ENCODE measurements at regions of chr3 and their contacts with region 1.

Region 1: DNA sequence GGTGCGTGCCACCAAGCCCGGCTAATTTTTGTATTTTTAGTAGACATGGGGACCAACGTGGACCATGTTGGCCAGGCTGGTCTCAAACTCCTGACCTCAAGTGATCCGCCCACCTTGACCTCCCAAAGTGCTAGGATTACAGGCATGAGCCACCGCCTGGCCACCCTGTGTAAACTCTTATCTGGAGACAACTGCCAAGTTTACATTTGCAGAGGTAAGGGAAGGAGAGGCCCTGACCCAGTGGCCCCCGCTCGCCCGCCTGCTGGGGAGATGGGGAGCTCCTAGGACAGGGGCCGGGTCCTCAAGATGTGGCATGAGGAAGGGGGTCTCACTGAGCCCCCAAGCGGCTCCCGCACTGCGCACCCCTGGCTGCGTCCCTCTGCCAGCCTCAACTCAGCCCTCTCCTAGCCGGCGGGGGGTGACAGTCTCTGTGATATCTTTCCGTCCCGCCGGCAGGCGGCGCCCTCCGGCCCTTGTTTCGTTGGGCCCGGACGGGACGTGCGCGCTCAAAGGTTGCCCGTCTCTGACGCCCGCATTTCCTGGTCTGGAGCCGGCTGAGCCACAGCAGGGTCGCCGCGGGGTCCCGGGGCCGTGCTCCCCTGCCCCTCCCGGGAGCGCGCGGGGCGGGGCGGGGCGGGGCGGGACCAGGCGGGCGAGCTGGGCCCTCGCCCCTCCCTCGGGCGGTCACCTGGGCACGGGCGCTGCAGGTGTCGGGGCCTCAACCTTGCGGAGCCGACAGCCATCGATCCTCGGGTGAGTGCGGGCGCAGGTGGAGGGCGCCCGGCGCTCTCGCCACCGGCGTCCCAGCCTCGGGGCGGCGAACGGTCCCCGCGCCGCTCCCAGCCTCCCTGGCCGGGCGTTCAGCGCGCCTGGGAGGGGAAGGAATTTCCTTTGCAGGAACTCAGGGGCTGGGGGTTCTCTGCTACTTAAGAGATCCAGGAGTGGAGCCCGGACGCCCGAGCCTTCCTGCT is at the start of gene GPR160:
- DNase-seq: peak; percentile 90
- ATAC-seq: peak; percentile 77
- H3K4me3 ChIP-seq: peak within 1 kb of the TSS; percentile 66 to 91 (median 83)
- H3K4me3 Mint-ChIP-seq: peak within 1 kb of the TSS; percentile 93
- H3K27ac ChIP-seq: peak within 1 kb of the TSS; percentile 28 to 48
- H3K27ac Mint-ChIP-seq: peak within 1 kb of the TSS; percentile 89
- H3K4me1 ChIP-seq: peaks cover 11 to 25% of the 10 kb centered on the region in 2 donors
- H3K4me1 Mint-ChIP-seq: peaks cover 44% of the 10 kb centered on the region
- H3K27me3 ChIP-seq: no peaks in the 10 kb centered on the region
- H3K27me3 Mint-ChIP-seq: no peaks in the 10 kb centered on the region
- CTCF ChIP-seq: peak; percentile 91
- total RNA-seq, gene GPR160: 17.5 and 17.7 TPM in 2 replicates

Region 2: GRCh38 chr3:169812332-169813235 is 225.2 kb before region 1 on chr3 and contains the starts of genes LRRC34 and LRRIQ4:
- CTCF ChIA-PET with region 1: no interaction called
- POLR2A ChIA-PET with region 1: no interaction called
- intact Hi-C with region 1: loop called (anchors 5 kb)
- DNase-seq: peak; percentile 80
- ATAC-seq: peak; percentile 60
- H3K4me3 ChIP-seq: peak within 1 kb of the TSS; percentile 66 to 79 (median 69)
- H3K4me3 Mint-ChIP-seq: peak within 1 kb of the TSS; percentile 87
- H3K27ac ChIP-seq: peak within 1 kb of the TSS; percentile 46 to 77
- H3K27ac Mint-ChIP-seq: peak within 1 kb of the TSS; percentile 93
- H3K4me1 ChIP-seq: peaks cover 19 to 28% of the 10 kb centered on the region in 2 donors
- H3K4me1 Mint-ChIP-seq: peaks cover 34% of the 10 kb centered on the region
- H3K27me3 ChIP-seq: no peaks in the 10 kb centered on the region
- H3K27me3 Mint-ChIP-seq: no peaks in the 10 kb centered on the region
- CTCF ChIP-seq: no peak
- total RNA-seq, gene LRRC34: 7.1 and 11.8 TPM in 2 replicates
- total RNA-seq, gene LRRIQ4: 0.53 and 0.71 TPM in 2 replicates

Region 3: DNA sequence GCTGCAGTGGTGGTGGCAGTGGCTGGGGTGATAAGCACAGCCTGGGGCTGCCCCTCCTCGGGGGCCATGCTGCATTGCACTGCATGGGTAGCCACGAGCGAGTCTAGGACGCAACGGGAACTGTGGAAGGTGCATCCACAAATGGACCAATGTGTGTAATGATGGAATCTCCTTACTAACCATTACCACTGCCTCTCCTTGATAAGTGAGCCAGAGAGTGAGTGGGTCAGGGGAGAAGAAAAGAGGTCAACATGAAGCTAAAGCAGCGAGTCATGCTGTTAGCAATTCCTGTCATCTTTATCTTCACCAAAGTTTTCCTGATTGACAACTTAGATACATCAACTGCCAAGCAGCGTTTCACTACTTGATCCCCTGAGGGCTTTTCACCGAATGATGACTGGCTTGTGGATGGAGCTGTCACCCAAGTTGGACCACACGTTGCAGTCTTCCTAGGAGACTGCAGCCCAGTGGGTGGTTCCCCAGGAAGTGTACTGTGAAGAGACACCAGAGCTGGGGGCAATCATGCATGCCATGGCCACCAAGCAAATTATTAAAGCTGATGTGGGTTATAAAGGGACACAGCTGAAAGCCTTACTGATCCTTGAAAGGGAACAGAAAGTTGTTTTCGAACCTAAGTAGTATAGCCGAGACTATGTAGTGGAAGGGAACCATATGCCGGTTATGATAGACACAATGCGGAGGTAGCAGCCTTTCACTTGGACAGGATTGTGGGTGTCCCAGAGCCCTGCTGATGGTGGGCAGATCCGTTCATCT is 105.8 kb before region 1 on chr3:
- CTCF ChIA-PET with region 1: interaction called, 5 read pairs
- POLR2A ChIA-PET with region 1: interaction called, 10 read pairs
- intact Hi-C with region 1: loop called (anchors 1 kb)
- DNase-seq: peak; percentile 89
- ATAC-seq: peak; percentile 83
- H3K4me3 ChIP-seq: peak overlapping the region in 4 of 5 experiments; percentile 7 to 54 (median 34)
- H3K4me3 Mint-ChIP-seq: peak overlapping the region; percentile 82
- H3K27ac ChIP-seq: peak overlapping the region; percentile 83 to 86
- H3K27ac Mint-ChIP-seq: peak overlapping the region; percentile 97
- H3K4me1 ChIP-seq: peaks cover 49 to 53% of the 10 kb centered on the region in 2 donors
- H3K4me1 Mint-ChIP-seq: peaks cover 55% of the 10 kb centered on the region
- H3K27me3 ChIP-seq: no peaks in the 10 kb centered on the region
- H3K27me3 Mint-ChIP-seq: no peaks in the 10 kb centered on the region
- CTCF ChIP-seq: no peak

Region 4: DNA sequence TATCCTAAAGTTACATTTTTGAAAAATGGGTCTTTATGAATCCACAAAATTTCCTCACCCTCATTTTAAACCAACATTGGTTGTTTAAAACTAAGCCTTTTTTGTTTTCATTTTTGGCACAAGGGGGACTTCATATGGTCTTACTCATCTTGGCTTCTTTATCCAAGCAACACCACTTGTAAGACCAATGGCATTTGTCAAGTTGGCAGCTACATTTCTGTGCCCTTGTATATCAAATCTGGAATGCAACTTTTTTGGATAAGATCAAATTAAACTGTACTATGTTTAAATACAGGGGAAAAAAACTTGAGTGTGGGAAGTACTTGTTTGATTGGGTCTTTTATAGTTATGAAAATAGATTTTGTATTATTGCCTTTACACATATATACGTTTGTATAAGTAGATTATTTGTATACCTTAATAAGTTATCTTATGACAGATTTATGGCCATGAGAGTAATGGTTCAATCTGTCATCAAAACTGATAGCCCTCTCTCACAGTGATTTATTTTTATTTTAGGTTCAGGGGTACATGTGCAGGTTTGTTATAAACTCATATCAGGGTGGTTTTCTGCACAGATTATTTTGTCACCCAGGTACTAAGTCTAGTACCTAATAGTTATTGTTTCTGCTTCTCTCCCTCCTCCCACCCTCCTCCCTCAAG is 43.5 kb after region 1 on chr3:
- CTCF ChIA-PET with region 1: no interaction called
- POLR2A ChIA-PET with region 1: no interaction called
- intact Hi-C with region 1: loop called (anchors 2 kb)
- DNase-seq: no peak
- ATAC-seq: no peak
- H3K4me3 ChIP-seq: no peak overlapping the region
- H3K4me3 Mint-ChIP-seq: no peak overlapping the region
- H3K27ac ChIP-seq: no peak overlapping the region
- H3K27ac Mint-ChIP-seq: no peak overlapping the region
- H3K4me1 ChIP-seq: peaks cover 0 to 3% of the 10 kb centered on the region in 2 donors
- H3K4me1 Mint-ChIP-seq: peaks cover 23% of the 10 kb centered on the region
- H3K27me3 ChIP-seq: no peaks in the 10 kb centered on the region
- H3K27me3 Mint-ChIP-seq: no peaks in the 10 kb centered on the region
- CTCF ChIP-seq: no peak

Region 5: DNA sequence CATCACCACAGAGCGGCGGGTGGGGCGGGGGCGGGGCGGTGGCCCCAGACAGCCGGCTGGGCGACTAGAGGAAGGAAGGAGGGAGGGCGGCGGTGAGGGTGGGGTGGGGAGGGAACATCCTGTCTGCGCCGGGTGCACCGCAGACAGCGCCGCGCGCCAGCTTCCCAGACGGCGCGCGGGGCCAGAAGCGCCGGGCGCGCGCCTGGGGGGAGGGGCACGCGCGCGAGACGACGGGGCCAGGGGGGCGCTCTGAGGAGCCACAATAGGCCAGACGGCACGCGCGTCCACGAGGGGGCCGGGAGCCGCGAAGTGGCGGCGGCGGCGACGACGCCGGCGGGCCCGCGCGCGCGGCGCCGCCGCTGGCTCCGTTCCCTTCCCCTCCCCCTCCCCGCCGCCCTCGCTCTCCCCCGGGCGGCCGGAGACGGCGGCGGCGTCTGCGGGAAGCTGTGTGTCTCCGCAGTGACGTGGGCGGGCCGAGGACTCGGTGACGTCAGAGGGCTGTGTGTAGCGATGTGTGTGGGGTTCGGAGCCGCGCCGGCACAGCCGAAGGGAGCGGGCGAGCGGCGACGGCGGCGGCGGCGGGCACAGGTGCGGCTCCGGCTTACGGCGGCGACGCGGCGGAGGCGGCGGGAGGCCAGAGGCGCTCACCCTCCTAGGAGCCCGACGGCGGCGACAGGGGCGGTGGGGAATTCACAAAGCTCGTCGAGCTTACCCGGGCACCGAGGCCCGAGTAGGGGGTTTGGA is 319.6 kb after region 1 on chr3 and contains the start of gene SKIL:
- CTCF ChIA-PET with region 1: no interaction called
- POLR2A ChIA-PET with region 1: no interaction called
- intact Hi-C with region 1: loop called (anchors 5 kb)
- DNase-seq: peak; percentile 99
- ATAC-seq: peak; percentile 56
- H3K4me3 ChIP-seq: peak within 1 kb of the TSS; percentile 70 to 90 (median 82)
- H3K4me3 Mint-ChIP-seq: peak within 1 kb of the TSS; percentile 91
- H3K27ac ChIP-seq: peak within 1 kb of the TSS; percentile 93 to 100
- H3K27ac Mint-ChIP-seq: peak within 1 kb of the TSS; percentile 99
- H3K4me1 ChIP-seq: peaks cover 70 to 71% of the 10 kb centered on the region in 2 donors
- H3K4me1 Mint-ChIP-seq: peaks cover 72% of the 10 kb centered on the region
- H3K27me3 ChIP-seq: no peaks in the 10 kb centered on the region
- H3K27me3 Mint-ChIP-seq: no peaks in the 10 kb centered on the region
- CTCF ChIP-seq: no peak
- total RNA-seq, gene SKIL: 145 and 148 TPM in 2 replicates

Measured in B cell (primary cell).